Activated B cell treated with CpG ODN at 0.5 μM for 24 hours (primary cell): ENCODE measurements at regions of chr11 and their contacts with region 1.

Region 1: DNA sequence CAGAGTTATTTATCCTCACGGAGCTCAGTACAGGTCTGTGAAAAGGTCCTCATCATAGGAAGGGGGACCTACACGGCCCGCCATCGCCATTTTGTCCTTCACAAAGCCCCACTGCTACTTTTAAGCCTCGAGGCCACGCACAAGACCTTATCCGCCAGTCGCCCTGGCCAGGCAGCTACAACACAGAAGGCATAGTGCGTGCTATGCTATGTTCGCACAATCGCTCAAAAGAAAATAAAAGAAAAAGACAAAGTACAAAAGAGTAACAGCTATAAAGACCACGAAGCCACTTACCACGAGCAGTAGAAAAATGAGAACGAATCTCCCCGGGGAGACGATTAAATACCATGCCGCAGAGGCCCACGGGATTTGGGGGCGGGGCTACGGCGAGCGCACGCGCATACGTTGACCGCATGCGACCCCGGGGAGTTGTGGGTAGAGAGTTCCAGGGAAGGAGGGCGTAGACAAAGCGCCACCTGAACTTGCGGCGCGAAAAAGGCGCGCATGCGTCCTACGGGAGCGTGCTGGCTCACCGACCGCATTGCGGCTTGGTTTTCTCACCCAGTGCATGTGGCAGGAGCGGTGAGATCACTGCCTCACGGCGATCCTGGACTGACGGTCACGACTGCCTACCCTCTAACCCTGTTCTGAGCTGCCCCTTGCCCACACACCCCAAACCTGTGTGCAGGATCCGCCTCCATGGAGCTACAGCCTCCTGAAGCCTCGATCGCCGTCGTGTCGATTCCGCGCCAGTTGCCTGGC is 16.4 kb upstream of the WDR74 start:
- DNase-seq: peak; percentile 99
- ATAC-seq: peak; percentile 89
- H3K4me3 Mint-ChIP-seq: peak overlapping the region; percentile 99
- H3K27ac Mint-ChIP-seq: peak overlapping the region; percentile 96
- H3K4me1 Mint-ChIP-seq: peaks cover 61% of the 10 kb centered on the region
- H3K27me3 Mint-ChIP-seq: no peaks in the 10 kb centered on the region
- CTCF ChIP-seq: no peak

Region 2: GRCh38 chr11:62573592-62574362 is 282.0 kb before region 1 on chr11 and contains the start of gene EEF1G:
- CTCF ChIA-PET with region 1: no interaction called
- POLR2A ChIA-PET with region 1: interaction called, 10 read pairs
- intact Hi-C with region 1: no loop called
- DNase-seq: peak; percentile 92
- ATAC-seq: peak; percentile 94
- H3K4me3 Mint-ChIP-seq: peak within 1 kb of the TSS; percentile 97
- H3K27ac Mint-ChIP-seq: peak within 1 kb of the TSS; percentile 94
- H3K4me1 Mint-ChIP-seq: peaks cover 51% of the 10 kb centered on the region
- H3K27me3 Mint-ChIP-seq: no peaks in the 10 kb centered on the region
- CTCF ChIP-seq: no peak
- total RNA-seq, gene EEF1G: 2,373 and 2,524 TPM in 2 replicates

Region 3: GRCh38 chr11:62645956-62646824 is 209.6 kb before region 1 on chr11 and contains the start of gene GANAB:
- CTCF ChIA-PET with region 1: no interaction called
- POLR2A ChIA-PET with region 1: interaction called, 4 read pairs
- intact Hi-C with region 1: loop called (anchors 1 kb)
- DNase-seq: peak; percentile 89
- ATAC-seq: peak; percentile 99
- H3K4me3 Mint-ChIP-seq: peak within 1 kb of the TSS; percentile 93
- H3K27ac Mint-ChIP-seq: peak within 1 kb of the TSS; percentile 86
- H3K4me1 Mint-ChIP-seq: peaks cover 34% of the 10 kb centered on the region
- H3K27me3 Mint-ChIP-seq: no peaks in the 10 kb centered on the region
- CTCF ChIP-seq: no peak
- total RNA-seq, gene GANAB: 187 and 189 TPM in 2 replicates

Region 4: GRCh38 chr11:62771144-62772021 is 84.4 kb before region 1 on chr11 and contains the start of gene TAF6L:
- CTCF ChIA-PET with region 1: no interaction called
- POLR2A ChIA-PET with region 1: interaction called, 17 read pairs
- intact Hi-C with region 1: no loop called
- DNase-seq: peak; percentile 81
- ATAC-seq: peak; percentile 88
- H3K4me3 Mint-ChIP-seq: peak within 1 kb of the TSS; percentile 92
- H3K27ac Mint-ChIP-seq: peak within 1 kb of the TSS; percentile 94
- H3K4me1 Mint-ChIP-seq: peaks cover 28% of the 10 kb centered on the region
- H3K27me3 Mint-ChIP-seq: no peaks in the 10 kb centered on the region
- CTCF ChIP-seq: no peak
- total RNA-seq, gene TAF6L: 32.9 and 38.6 TPM in 2 replicates

Region 5: GRCh38 chr11:62805076-62805892 is 50.5 kb before region 1 on chr11 and contains the start of gene NXF1:
- CTCF ChIA-PET with region 1: no interaction called
- POLR2A ChIA-PET with region 1: interaction called, 15 read pairs
- intact Hi-C with region 1: loop called (anchors 1 kb)
- DNase-seq: peak; percentile 99
- ATAC-seq: peak; percentile 86
- H3K4me3 Mint-ChIP-seq: peak within 1 kb of the TSS; percentile 96
- H3K27ac Mint-ChIP-seq: peak within 1 kb of the TSS; percentile 93
- H3K4me1 Mint-ChIP-seq: peaks cover 36% of the 10 kb centered on the region
- H3K27me3 Mint-ChIP-seq: no peaks in the 10 kb centered on the region
- CTCF ChIP-seq: no peak
- total RNA-seq, gene NXF1: 89.1 and 91.6 TPM in 2 replicates

Region 6: DNA sequence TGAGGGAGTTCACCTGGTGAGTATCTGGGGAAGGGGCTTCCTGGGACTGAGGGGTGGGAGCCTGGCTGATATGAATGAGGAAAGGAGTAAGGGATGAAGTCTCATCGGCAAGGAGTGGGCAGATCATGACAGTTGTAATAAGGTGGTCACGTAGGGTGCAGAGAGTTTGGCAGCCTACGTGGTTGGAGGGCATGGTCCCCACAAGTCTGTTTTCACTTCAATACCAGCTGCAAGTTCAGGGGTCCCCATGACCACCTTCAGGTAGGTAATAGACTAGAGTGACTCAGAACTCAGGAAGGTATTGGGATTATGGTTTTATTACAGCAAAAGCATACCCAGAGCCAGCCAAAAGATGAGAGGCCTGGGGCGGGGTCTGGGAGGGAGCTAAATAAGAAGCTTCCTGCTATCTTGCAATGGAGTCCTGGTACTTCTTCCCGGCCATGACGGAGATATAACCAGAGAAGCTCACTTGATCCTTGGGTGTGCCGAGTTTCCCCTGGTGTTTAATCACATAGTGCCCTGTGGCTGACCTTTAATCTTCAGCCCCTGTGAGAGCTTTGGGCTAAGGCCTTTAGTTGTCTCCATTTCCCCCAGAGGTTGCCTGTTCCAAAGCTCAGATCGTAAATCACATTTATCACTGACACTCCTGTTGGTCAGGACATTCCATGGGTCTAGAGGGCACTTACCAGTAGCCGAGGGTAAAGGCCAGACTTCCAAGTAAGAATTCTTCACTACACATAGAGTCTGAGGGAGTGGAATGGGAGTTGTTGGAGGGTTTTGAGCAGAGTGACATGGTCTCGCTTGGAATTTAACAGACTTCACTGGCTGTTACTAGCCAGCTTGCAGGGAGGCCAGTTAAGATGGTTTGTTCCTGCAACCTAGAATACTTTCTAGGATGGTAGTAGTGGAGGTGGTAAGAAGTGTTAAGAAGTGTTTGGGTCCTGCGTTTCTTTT is 34.0 kb after region 1 on chr11:
- CTCF ChIA-PET with region 1: no interaction called
- POLR2A ChIA-PET with region 1: interaction called, 14 read pairs
- intact Hi-C with region 1: no loop called
- DNase-seq: no peak
- ATAC-seq: peak; percentile 26
- H3K4me3 Mint-ChIP-seq: peak overlapping the region; percentile 45
- H3K27ac Mint-ChIP-seq: no peak overlapping the region
- H3K4me1 Mint-ChIP-seq: peaks cover 7% of the 10 kb centered on the region
- H3K27me3 Mint-ChIP-seq: peaks cover 2% of the 10 kb centered on the region
- CTCF ChIP-seq: no peak

Region 7: DNA sequence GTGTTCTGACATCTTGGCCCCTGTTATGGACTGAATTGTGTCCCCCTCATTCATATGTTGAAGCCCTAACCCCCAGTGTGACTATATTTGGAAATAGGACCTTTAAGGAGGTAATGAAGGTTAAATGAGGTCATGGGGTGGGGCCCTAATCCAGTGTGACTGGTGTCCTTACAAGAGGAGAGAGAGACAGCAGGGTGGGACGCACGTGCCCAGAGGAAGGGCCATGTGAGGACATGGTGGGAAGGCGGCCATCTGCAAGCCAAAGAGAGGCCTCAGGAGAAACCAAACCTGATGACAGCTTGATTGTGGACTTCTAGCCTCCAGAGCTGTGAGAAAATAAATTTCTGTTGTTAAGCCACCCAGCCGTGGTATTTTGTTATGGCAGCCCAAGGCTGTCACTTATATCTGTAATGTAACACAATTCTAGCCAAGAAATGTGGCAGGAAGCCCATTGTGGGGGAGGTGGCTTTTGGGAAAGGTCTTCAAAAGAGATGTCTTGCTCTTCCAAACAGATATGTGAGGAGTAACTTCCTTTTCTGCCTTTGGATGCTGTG is 105.3 kb after region 1 on chr11:
- CTCF ChIA-PET with region 1: no interaction called
- POLR2A ChIA-PET with region 1: no interaction called
- intact Hi-C with region 1: no loop called
- DNase-seq: no peak
- ATAC-seq: no peak
- H3K4me3 Mint-ChIP-seq: no peak overlapping the region
- H3K27ac Mint-ChIP-seq: no peak overlapping the region
- H3K4me1 Mint-ChIP-seq: no peaks in the 10 kb centered on the region
- H3K27me3 Mint-ChIP-seq: peaks cover 41% of the 10 kb centered on the region
- CTCF ChIP-seq: no peak

Region 8: DNA sequence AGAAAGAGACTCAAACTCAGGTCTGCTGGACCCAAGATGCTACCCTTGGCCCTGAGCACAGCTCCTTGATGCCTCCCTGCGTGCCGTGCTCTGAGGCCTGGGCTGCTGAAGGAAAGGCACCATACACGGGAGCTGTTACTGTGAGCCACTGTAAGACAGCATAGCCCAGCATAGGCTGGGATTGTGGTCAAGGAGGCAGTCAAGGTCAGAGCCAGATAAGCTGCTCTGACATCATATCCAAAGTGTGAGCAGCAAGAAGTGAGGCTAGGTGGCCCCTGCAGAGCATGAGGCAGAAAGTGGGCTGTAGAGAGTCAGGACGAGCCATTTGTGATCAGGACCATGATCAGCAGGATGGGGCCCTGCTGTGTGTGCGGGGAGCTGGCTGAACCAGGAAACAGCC is 152.2 kb after region 1 on chr11:
- CTCF ChIA-PET with region 1: no interaction called
- POLR2A ChIA-PET with region 1: no interaction called
- intact Hi-C with region 1: no loop called
- DNase-seq: no peak
- ATAC-seq: no peak
- H3K4me3 Mint-ChIP-seq: no peak overlapping the region
- H3K27ac Mint-ChIP-seq: no peak overlapping the region
- H3K4me1 Mint-ChIP-seq: no peaks in the 10 kb centered on the region
- H3K27me3 Mint-ChIP-seq: no peaks in the 10 kb centered on the region
- CTCF ChIP-seq: no peak

Region 9: DNA sequence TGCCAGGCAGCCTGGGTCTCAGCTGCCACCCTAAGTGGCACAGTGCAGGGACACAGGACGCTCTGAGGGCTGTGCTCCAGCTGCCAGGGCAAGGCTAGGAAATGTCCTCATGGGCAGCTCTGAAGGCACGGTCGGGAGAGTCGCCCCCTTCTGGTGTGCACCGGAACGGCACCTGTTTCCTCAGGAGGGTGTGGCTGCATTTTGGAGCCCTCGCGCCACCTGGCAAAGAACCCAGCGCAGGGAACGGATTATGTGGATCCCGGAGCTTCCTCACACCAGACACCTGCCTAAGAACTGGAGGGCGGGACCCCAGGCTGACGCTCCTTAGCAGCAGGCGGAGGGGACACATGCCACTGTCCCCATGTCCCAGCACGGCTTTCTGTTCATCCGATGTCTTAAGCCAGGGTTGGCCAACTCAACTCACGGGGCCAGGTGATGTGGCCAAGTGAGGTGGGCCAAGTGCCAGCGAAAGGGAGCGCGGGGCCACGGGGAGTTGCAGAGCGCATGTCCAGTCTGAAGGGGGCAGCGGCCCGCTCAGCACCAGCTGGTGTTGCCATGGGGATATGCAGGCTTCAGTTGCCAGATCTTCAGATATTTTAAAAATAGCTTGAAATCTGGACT is 165.0 kb after region 1 on chr11:
- CTCF ChIA-PET with region 1: no interaction called
- POLR2A ChIA-PET with region 1: no interaction called
- intact Hi-C with region 1: no loop called
- DNase-seq: no peak
- ATAC-seq: no peak
- H3K4me3 Mint-ChIP-seq: no peak overlapping the region
- H3K27ac Mint-ChIP-seq: no peak overlapping the region
- H3K4me1 Mint-ChIP-seq: peaks cover 4% of the 10 kb centered on the region
- H3K27me3 Mint-ChIP-seq: peaks cover 28% of the 10 kb centered on the region
- CTCF ChIP-seq: no peak

Region 10: GRCh38 chr11:63099555-63099954 is 243.8 kb after region 1 on chr11:
- CTCF ChIA-PET with region 1: no interaction called
- POLR2A ChIA-PET with region 1: no interaction called
- intact Hi-C with region 1: no loop called
- DNase-seq: no peak
- ATAC-seq: no peak
- H3K4me3 Mint-ChIP-seq: no peak overlapping the region
- H3K27ac Mint-ChIP-seq: no peak overlapping the region
- H3K4me1 Mint-ChIP-seq: no peaks in the 10 kb centered on the region
- H3K27me3 Mint-ChIP-seq: peaks cover 2% of the 10 kb centered on the region
- CTCF ChIP-seq: no peak